ENCODE measurements at regions of chr14 and their contacts with region 1.

Region 1: DNA sequence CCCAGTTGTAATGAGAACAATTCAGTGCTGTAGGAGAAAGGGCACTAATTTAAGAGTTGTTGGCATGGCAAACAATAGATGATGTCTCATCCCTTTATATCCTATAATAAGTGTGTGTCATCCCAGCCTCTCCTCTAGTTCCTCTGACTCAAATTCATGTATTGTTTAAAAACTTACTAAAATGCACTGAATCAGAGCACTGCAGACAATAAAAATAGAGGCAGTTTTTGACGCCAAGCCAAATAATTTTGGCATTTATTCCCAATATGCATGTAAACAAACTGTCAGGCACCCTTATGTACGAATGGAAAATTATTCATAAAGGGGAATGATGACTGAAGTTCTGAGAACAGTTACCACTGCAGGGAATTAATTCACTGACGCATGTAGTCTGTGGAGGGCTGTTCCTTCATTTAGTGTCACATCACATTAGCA is 57.9 kb upstream of the TMX1 start:
- DNase-seq: peak; percentile 100
- ATAC-seq: peak; percentile 96
- H3K4me3 ChIP-seq: peak overlapping the region; percentile 33; the same call in 1 of the 2 replicates
- H3K27ac ChIP-seq: peak overlapping the region; percentile 89
- H3K4me1 ChIP-seq: peaks cover 28% of the 10 kb centered on the region
- H3K27me3 ChIP-seq: no peaks in the 10 kb centered on the region
- CTCF ChIP-seq: no peak

Region 2: DNA sequence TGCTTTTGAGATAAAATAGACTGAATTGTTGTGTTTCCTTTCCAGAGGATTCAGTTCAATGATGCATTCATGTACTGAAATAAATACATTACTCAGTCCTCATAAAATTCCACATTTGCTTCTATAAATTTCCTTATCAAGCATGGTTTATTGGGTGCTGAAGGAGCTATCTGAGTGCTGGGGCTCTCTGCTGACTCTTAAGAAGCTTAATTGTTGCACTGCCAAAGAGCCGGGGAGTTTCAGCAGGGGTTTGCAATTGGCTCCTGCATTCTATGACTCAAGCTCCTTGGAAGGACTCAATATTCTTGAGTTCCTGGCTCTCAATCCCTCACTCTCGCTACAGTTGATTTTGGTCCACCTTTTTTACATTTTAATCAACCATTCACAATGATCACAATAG is 168.1 kb before region 1 on chr14:
- CTCF ChIA-PET with region 1: no interaction called
- POLR2A ChIA-PET with region 1: no interaction called
- intact Hi-C with region 1: loop called (anchors 1 kb)
- DNase-seq: peak; percentile 89
- ATAC-seq: peak; percentile 92
- H3K4me3 ChIP-seq: peak overlapping the region; percentile 26; the same call in 1 of the 2 replicates
- H3K27ac ChIP-seq: peak overlapping the region; percentile 91
- H3K4me1 ChIP-seq: peaks cover 21% of the 10 kb centered on the region
- H3K27me3 ChIP-seq: no peaks in the 10 kb centered on the region
- CTCF ChIP-seq: no peak

Region 3: DNA sequence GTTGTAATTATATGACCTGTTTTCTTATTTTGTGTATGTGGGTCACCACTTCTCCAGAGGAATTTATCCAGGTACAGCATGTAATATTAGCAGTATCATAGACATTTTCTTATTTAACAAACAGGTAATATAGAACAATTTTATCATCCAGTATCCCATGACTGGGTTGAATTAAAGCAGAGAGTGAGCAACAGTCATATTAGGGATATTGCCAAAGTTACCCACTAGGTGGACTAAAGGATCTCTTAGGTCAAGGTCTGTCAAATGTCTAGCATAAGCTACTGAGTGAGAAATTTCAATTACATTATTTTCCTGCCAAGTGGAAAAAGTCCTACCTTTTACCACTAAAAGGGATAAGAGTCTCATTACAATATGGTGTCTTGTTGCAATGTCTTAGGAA is 25.1 kb before region 1 on chr14:
- CTCF ChIA-PET with region 1: no interaction called
- POLR2A ChIA-PET with region 1: no interaction called
- intact Hi-C with region 1: loop called (anchors 1 kb)
- DNase-seq: peak; percentile 75
- ATAC-seq: peak; percentile 98
- H3K4me3 ChIP-seq: no peak overlapping the region
- H3K27ac ChIP-seq: no peak overlapping the region
- H3K4me1 ChIP-seq: peaks cover 11% of the 10 kb centered on the region
- H3K27me3 ChIP-seq: no peaks in the 10 kb centered on the region
- CTCF ChIP-seq: peak; percentile 91

Region 4: GRCh38 chr14:51167587-51168214 is 14.4 kb before region 1 on chr14:
- CTCF ChIA-PET with region 1: no interaction called
- POLR2A ChIA-PET with region 1: no interaction called
- intact Hi-C with region 1: loop called (anchors 1 kb)
- DNase-seq: peak; percentile 17
- ATAC-seq: 0 out of 2 replicates have a peak, but pooled peaks have one; percentile 8
- H3K4me3 ChIP-seq: no peak overlapping the region
- H3K27ac ChIP-seq: no peak overlapping the region
- H3K4me1 ChIP-seq: peaks cover 36% of the 10 kb centered on the region
- H3K27me3 ChIP-seq: no peaks in the 10 kb centered on the region
- CTCF ChIP-seq: no peak

Region 5: DNA sequence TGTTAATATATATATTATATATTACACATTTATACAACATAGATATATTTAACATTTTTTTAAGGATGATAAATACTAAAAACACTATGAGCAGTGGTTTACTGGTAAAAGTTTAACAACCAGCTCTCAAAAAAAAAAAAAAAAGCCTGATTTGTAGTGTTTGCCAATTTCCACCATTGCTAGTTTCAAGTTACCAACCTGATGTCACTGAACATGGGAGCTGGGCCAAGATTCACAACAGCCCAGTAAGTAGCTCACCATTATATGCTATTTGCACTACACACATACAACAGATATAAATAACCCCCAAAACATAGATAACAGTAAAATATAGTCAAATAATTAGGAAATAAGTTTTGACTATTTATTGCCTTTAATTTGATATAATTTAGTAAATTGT is 29.0 kb after region 1 on chr14:
- CTCF ChIA-PET with region 1: no interaction called
- POLR2A ChIA-PET with region 1: no interaction called
- intact Hi-C with region 1: loop called (anchors 1 kb)
- DNase-seq: peak; percentile 63
- ATAC-seq: peak; percentile 71
- H3K4me3 ChIP-seq: no peak overlapping the region
- H3K27ac ChIP-seq: no peak overlapping the region
- H3K4me1 ChIP-seq: peaks cover 7% of the 10 kb centered on the region; the same call in 1 of the 2 replicates
- H3K27me3 ChIP-seq: no peaks in the 10 kb centered on the region
- CTCF ChIP-seq: no peak

Region 6: DNA sequence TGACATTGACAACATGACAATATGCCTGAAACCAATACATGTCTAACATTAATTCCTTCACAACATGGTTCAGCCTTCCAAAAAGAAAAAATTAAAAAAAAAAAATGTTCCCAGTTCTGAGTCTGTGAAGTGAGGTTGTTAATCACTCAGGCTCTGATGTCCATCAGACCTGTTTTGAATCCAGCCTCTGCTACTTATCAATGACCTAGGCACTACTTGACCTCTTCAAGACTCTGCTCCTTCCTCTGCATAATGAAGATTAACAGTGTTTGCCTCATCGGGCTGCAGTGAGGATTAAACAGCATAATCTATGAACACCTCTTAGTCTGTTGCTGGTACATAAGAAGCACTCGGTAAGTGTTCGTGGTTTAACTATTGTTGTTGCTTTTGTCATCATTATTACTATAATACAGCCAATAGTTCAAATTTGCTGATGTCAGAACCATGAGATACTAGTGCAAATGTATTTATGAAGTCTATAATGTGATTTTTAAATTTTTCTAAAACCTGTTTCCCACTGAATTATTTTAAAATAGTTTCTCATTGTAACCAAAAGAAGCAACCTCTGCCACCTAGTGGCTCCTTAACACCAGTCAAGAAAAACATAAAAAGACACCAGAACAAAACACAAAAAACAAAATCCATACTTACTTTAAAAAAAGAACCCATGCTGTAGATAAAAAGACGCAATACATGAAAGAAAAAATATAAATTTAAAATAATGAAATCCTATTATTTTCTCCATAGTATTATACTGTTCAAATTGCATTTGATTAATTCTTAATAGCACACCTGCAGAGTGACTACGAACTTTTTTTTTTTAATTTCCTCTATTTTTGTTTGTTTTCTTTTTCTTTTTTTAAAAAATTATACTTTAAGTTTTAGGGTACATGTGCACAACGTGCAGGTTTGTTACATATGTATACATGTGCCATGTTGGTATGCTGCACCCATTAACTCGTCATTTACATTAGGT is 37.6 kb after region 1 on chr14:
- CTCF ChIA-PET with region 1: no interaction called
- POLR2A ChIA-PET with region 1: no interaction called
- intact Hi-C with region 1: loop called (anchors 2 kb)
- DNase-seq: peak; percentile 63
- ATAC-seq: peak; percentile 65
- H3K4me3 ChIP-seq: no peak overlapping the region
- H3K27ac ChIP-seq: no peak overlapping the region
- H3K4me1 ChIP-seq: no peaks in the 10 kb centered on the region
- H3K27me3 ChIP-seq: no peaks in the 10 kb centered on the region
- CTCF ChIP-seq: peak; percentile 90